PC-9 (cell line): ENCODE measurements at regions of chr16 and their contacts with region 1.

Region 1: DNA sequence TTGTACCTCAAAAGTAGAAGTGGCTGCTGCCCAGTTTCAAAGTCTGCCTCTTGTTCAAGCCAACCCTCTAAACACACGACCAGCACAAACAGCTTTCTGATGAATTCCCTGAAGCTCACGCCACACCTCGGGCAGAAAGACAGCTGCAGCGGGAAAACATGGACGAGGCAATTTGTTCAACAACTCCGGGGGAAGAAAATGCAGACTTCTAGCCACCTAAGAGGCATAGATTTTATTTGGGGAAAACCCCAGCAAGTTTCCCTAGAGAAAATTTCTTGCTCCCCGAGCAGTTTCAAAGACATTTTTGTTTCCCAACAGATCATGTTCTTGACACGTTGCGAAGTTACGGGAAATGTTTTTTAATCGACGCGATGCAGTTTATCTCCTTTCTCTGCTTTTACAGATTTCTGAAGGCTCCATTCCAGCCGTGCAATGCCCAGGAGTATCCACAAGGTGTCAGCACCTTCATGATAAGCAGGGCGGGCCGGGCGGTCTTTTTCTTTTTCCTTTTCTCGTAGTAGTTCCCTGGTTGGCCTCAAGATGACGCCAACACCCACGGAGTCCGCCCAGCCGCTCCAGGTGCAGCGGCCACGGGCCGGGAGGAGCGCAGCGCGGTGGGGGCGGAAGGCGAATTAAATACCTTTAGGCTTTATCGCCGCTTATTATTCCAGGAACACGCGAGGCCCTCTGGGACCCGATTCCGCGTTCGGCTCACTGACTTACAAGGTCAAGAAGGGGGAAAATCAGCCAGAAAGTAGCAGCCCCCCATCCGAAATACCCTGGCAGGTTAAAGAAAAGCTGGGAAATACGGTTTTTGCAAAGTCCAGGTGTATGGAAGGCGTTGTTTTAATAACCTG is 2.9 kb upstream of the FOXC2 start:
- DNase-seq: peak; percentile 72 to 82
- H3K4me3 ChIP-seq: peak overlapping the region; percentile 19; the same call in 1 of the 2 replicates
- H3K27ac ChIP-seq: no peak overlapping the region
- H3K4me1 ChIP-seq: no peaks in the 10 kb centered on the region
- H3K27me3 ChIP-seq: peaks cover 42% of the 10 kb centered on the region
- CTCF ChIP-seq: peak; percentile 100

Region 2: GRCh38 chr16:86751076-86752030 is 187.6 kb after region 1 on chr16:
- CTCF ChIA-PET with region 1: no interaction called
- POLR2A ChIA-PET with region 1: no interaction called
- intact Hi-C with region 1: no loop called
- DNase-seq: no peak
- H3K4me3 ChIP-seq: no peak overlapping the region
- H3K27ac ChIP-seq: no peak overlapping the region
- H3K4me1 ChIP-seq: no peaks in the 10 kb centered on the region
- H3K27me3 ChIP-seq: peaks cover 85% of the 10 kb centered on the region
- CTCF ChIP-seq: no peak

Region 3: GRCh38 chr16:87203060-87203656 is 639.4 kb after region 1 on chr16:
- CTCF ChIA-PET with region 1: no interaction called
- POLR2A ChIA-PET with region 1: no interaction called
- intact Hi-C with region 1: loop called (anchors 10 kb)
- DNase-seq: peak; percentile 51 to 67
- H3K4me3 ChIP-seq: no peak overlapping the region
- H3K27ac ChIP-seq: 0 out of 2 replicates have a peak overlapping the region, but pooled peaks have one; percentile 12
- H3K4me1 ChIP-seq: peaks cover 67% of the 10 kb centered on the region
- H3K27me3 ChIP-seq: no peaks in the 10 kb centered on the region
- CTCF ChIP-seq: peak; percentile 93